ENCODE measurements at regions of chr15 and their contacts with region 1.

Region 1: DNA sequence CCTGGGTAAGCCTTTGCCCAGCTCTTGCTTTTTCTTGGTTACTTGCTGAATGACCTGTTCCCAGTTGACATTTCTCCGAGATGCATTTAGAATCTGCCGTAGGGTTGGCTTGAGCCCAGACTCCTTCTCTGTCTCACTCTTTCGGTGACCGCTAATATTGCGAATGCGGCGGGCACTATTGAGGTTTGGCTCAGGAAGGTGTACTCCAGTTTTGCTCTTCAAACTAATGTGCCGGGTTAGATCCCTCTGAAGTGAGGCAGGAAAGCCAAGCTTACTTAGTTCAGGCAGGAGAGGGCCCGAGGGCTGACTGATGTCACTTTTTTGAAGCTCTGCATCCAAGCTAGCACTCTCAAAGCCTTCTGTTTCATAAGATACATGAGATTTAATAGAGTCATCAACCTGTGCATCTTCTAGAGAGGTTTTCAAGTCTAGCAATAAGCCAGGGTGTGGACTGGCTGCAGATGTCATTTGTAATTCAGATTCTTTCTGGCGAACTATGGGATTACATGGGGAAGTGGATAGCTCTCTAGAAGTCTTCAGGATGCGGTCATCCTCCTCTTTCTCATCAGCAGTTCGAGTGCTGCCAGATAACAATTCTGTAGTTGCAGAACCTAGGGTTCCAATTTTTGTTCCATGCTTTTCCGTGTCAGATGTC is 41.0 kb downstream of the ZNF106 start:
- DNase-seq: no peak
- ATAC-seq: no peak

Region 2: DNA sequence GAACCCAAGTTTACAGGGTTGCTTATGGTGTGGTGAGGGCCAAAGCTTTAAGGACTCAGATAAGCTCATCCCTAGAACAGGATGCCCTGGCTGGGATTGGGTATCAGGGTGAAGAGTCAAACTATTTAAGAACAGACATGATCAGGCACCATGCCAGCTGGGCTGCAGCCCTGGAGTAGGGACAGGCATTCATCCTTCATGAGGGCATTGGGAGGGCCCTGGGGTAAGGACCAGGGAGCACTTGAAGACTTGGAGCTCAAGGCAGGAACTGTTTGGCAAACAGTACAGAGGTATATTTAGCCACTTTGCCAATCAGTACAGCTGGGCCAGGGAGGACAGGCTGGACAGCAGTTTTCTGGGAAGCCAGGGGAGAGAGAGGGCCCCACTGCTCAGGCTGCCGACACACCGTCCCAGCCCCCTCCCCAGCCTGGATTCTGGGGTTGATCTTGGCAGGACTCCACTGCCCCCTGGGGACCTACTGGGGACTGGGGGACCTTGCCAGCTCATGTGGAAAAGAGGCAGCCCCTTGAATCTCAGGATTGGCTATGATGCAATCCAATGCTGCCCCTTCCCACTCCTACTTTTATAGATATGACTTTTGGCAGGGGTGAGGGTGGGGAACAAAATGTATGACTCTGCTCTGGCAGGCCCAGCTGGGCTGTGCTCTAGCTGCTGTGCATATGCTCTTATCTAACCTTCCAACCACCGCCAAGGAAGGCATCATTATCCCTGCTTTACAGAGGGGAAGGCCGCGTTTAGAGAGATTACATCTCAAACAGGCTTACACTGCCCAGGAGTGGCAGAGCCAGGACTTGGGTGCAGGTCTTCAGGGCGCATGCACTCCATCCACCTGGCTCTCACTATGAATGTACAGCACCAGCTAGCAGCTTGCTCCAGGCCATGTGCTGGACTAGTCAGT is 431.3 kb before region 1 on chr15:
- intact Hi-C with region 1: loop called (anchors 5 kb)
- DNase-seq: no peak
- ATAC-seq: peak; percentile 45